HepG2 (cell line): ENCODE measurements at regions of chr5 and their contacts with region 1.

Region 1: DNA sequence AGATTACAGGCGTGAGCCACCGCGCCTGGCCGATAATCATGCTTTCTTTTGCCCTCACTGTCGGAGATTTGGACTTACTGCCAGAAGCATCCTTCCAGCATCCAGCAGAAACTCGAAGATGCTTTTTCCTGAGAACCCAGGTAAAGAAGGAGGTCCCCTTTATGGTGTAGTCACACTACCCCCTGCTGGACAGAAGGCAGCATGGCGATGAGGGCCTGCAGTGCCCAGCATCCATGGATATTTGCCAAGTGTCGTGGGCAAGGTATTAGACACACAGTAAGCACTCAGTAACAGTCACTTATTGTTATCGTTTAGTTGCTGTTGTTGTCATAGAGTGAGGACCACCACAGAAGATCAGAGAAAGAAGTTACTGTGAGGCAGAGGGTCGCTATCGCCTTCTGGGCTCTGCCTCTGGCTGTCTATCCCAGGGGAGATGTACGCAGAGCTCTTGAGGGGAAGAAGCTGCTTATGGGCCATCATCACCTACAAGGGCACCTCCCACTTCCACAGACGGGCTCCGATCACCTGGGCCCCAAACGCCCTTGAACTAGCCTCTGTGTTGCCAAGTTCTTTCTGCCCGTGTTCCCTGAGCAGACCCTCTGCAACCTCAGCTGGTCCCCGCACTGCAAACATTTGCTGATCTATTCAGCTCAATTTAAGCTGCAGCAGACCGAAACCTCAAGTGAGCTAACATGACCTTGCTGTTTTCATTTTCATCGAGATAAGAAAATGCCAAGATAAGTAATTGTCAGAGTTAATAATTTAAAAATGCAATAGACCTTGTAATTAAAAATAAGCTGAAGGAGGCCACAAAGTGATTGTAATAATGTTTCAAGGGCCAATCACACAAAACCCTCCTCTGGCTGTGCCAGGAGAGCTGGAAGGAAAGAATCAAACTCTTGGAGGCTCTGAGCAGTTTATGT is 23.9 kb downstream of the C5orf15 start:
- DNase-seq: peak; percentile 47
- ATAC-seq: peak; percentile 80
- H3K4me3 ChIP-seq: no peak overlapping the region
- H3K27ac ChIP-seq: no peak overlapping the region
- H3K4me1 ChIP-seq: 0 out of 2 replicates have a peak, but pooled peaks cover 6% of the 10 kb centered on the region
- H3K27me3 ChIP-seq: 0 out of 5 replicates have a peak, but pooled peaks cover 0 to 9% of the 10 kb centered on the region in 2 experiments
- CTCF ChIP-seq: peak; percentile 89
- EP300 ChIP-seq: no peak
- POLR2A ChIP-seq: no peak
- RAD21 ChIP-seq: peak; percentile 61

Region 2: DNA sequence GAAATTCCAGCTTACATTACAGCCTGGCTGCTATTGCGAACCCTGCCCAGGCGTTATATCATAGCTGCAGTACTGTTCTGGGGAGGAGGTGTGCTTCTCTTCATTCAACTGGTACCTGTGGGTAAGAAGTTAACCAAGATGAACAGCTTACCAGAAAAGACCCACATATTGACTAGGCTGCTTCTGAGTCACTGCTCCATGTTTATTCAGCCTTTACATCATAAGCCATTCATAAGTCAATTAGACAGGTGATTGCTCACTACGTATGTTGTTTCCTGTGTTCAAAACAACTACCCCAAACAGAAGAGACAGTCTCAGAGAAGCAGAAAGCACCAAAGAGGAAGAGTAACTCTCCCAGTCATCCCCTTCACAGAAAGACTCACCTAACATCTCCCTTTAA is 1609.7 kb before region 1 on chr5:
- CTCF ChIA-PET with region 1: no interaction called
- POLR2A ChIA-PET with region 1: no interaction called
- in situ Hi-C with region 1: no loop called
- intact Hi-C with region 1: no loop called
- DNase-seq: peak; percentile 14
- ATAC-seq: no peak; the same call in 2 of the 3 replicates
- H3K4me3 ChIP-seq: no peak overlapping the region
- H3K27ac ChIP-seq: no peak overlapping the region
- H3K4me1 ChIP-seq: peaks cover 22% of the 10 kb centered on the region
- H3K27me3 ChIP-seq: no peaks in the 10 kb centered on the region
- CTCF ChIP-seq: no peak
- EP300 ChIP-seq: no peak
- POLR2A ChIP-seq: no peak
- RAD21 ChIP-seq: no peak

Region 3: DNA sequence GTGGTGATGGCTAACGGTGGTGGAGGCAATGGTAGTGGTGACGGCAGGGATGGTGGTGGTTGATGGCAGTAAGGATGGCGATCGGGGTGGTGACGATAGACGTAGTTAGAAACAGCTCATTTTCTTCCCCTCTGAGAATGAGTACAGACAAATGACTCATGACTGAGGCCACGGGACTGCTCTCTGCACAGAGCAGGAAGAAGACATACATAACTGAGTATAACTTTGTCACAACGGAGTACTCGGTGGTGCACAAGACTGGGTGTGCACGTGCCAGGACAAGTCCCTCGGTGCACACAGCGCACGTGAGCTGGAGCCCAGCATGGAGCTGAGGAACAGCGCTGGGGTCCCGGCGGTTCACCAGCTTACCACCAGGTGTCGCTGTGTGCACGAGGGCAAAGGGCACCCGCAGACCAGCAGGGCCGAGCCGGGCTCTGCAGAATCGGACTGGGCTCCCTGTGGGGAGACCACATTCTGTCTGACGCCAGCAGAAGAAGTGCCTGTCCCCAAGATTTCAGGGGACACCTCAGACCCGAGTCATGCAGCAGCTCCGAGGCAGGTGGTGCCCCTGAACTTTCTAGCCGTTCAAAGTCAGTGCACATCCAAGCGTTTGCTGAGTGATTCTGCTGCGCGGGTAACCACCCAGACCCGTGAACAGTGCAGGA is 520.8 kb before region 1 on chr5:
- CTCF ChIA-PET with region 1: interaction called, 6 read pairs
- POLR2A ChIA-PET with region 1: no interaction called
- in situ Hi-C with region 1: loop called (anchors 10 kb)
- intact Hi-C with region 1: loop called (anchors 2 kb)
- DNase-seq: peak; percentile 28
- ATAC-seq: peak; percentile 97
- H3K4me3 ChIP-seq: peak overlapping the region in 1 of 3 experiments; percentile 32; a peak in 1 of 6 replicates
- H3K27ac ChIP-seq: no peak overlapping the region
- H3K4me1 ChIP-seq: peaks cover 9% of the 10 kb centered on the region; the same call in 1 of the 2 replicates
- H3K27me3 ChIP-seq: peaks cover 2 to 36% of the 10 kb centered on the region in 2 experiments; a peak in 3 of 5 replicates
- CTCF ChIP-seq: peak; percentile 96
- EP300 ChIP-seq: no peak
- POLR2A ChIP-seq: no peak
- RAD21 ChIP-seq: peak; percentile 84

Region 4: DNA sequence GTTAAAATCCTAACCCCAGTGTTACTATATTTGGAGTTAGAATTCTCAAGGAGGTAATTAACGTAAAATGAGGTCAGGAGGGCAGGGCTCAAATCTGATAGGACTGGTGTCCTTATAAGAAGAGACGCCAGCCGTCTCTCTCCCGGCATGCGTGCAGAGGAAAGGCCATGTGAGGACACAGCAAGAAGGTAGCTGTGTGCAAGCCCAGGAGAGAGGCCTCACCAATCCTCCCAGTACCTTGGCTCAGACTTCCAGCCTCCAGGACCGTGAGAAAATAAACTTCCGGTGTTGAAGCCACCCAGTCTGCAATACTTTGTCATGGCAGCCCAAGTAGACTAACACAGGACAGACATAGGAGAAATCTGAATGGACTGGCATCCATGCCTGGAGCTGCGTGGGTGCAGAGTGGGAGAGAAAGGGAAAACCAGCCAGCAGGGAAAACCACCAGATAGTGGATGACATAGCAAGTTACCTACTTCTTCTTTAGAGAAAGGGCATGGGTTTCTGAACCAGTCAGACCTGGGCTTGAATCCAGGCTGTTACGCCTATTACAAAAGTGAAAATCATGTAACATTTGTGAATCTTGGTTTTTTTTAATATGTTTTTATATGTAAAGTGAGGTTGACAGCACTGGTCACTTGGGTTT is 421.4 kb before region 1 on chr5:
- CTCF ChIA-PET with region 1: no interaction called
- POLR2A ChIA-PET with region 1: no interaction called
- in situ Hi-C with region 1: no loop called
- intact Hi-C with region 1: no loop called
- DNase-seq: no peak
- ATAC-seq: no peak
- H3K4me3 ChIP-seq: no peak overlapping the region
- H3K27ac ChIP-seq: no peak overlapping the region
- H3K4me1 ChIP-seq: no peaks in the 10 kb centered on the region
- H3K27me3 ChIP-seq: peaks cover 2 to 3% of the 10 kb centered on the region in 2 experiments; a peak in 2 of 5 replicates
- CTCF ChIP-seq: no peak
- EP300 ChIP-seq: no peak
- POLR2A ChIP-seq: no peak
- RAD21 ChIP-seq: no peak

Region 5: DNA sequence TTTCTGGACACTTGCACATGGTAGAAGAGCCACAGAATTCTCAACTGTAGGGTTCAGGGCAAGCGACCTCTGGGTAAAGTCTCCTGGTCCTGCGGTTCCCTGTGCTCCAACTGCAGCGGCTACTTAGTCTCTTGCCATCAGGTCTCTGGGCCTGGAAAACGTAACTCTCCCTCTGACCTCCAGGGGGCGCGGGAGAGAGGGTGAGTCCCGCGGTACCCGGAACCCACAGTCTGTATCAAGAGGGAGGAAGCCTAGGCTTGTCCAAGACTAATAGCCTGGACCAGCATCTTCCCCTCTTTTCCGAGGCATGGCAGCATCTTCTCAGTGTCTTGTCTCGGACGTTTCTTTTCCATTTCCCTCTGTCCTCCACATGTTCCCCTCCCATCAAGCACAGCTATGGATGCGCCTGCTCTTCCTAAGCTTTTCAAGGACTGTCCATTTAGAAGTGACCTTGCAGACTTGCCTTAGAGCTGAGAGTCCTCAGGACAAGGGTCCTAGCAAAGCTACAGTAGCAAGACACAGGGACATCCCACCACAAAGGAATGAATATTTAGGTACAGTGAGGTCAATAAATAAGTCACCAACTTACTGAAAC is 391.5 kb before region 1 on chr5:
- CTCF ChIA-PET with region 1: no interaction called
- POLR2A ChIA-PET with region 1: no interaction called
- in situ Hi-C with region 1: no loop called
- intact Hi-C with region 1: loop called (anchors 10 kb)
- DNase-seq: peak; percentile 25
- ATAC-seq: peak; percentile 91
- H3K4me3 ChIP-seq: no peak overlapping the region
- H3K27ac ChIP-seq: no peak overlapping the region
- H3K4me1 ChIP-seq: no peaks in the 10 kb centered on the region
- H3K27me3 ChIP-seq: no peaks in the 10 kb centered on the region
- CTCF ChIP-seq: peak; percentile 76
- EP300 ChIP-seq: no peak
- POLR2A ChIP-seq: no peak
- RAD21 ChIP-seq: peak; percentile 29; the same call in 1 of the 2 replicates

Region 6: DNA sequence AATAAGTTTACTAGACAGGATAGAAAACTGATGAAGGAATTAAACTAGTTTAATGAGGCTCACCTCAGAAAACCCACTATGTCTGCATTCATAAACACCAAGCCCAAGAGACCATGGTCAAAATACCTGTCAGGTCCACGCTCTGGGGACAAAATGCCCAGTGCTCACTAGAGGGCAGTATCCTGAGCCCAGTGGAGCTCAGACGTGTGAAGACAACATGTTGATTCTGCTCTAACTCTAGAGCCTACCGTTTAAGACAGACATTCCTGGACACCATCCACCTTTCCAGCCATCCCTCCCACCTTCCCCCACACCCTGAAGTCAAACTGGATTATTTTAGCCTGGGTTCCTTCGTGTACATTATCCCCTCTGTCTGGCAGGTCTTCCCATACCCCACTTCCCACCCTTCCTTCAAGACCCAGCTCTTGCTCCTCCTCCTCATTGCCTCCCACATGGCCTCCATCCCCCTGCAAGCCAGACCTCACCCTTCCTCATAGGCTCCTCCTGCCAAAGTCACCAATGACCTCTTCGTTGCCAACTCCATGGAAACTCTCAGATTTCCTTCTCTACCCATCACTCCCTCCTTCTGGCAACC is 189.9 kb before region 1 on chr5:
- CTCF ChIA-PET with region 1: interaction called, 5 read pairs
- POLR2A ChIA-PET with region 1: no interaction called
- in situ Hi-C with region 1: no loop called
- intact Hi-C with region 1: loop called (anchors 10 kb)
- DNase-seq: peak; percentile 28
- ATAC-seq: peak; percentile 83
- H3K4me3 ChIP-seq: no peak overlapping the region
- H3K27ac ChIP-seq: no peak overlapping the region
- H3K4me1 ChIP-seq: no peaks in the 10 kb centered on the region
- H3K27me3 ChIP-seq: no peaks in the 10 kb centered on the region
- CTCF ChIP-seq: peak; percentile 68
- EP300 ChIP-seq: no peak
- POLR2A ChIP-seq: no peak
- RAD21 ChIP-seq: no peak

Region 7: DNA sequence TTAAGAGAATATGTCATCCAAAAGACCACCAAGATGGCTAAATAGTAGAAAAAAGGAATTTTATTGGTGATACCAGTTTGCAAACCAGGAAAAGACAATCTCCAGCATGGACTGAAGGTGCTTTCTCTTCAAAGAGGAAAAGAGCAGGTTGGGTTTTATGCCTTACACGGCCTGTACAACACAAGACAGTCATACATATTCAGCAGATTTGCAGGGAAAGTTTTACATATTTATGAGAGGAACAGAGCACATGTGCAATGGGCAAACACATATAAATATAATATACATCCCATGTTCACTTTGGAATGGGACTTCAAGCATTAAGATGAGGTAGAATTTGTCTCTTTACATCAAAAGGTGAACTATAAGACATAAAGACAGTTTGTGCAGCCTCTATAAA is 351.7 kb after region 1 on chr5:
- CTCF ChIA-PET with region 1: no interaction called
- POLR2A ChIA-PET with region 1: no interaction called
- in situ Hi-C with region 1: no loop called
- intact Hi-C with region 1: no loop called
- DNase-seq: no peak
- ATAC-seq: no peak
- H3K4me3 ChIP-seq: no peak overlapping the region
- H3K27ac ChIP-seq: no peak overlapping the region
- H3K4me1 ChIP-seq: peaks cover 22% of the 10 kb centered on the region
- H3K27me3 ChIP-seq: no peaks in the 10 kb centered on the region
- CTCF ChIP-seq: no peak
- EP300 ChIP-seq: no peak
- POLR2A ChIP-seq: no peak
- RAD21 ChIP-seq: no peak

Region 8: GRCh38 chr5:134370871-134371833 is 426.6 kb after region 1 on chr5 and contains the start of gene UBE2B:
- CTCF ChIA-PET with region 1: no interaction called
- POLR2A ChIA-PET with region 1: no interaction called
- in situ Hi-C with region 1: no loop called
- intact Hi-C with region 1: no loop called
- DNase-seq: peak; percentile 99
- ATAC-seq: peak; percentile 71
- H3K4me3 ChIP-seq: peak within 1 kb of the TSS; percentile 90 to 99 (median 98)
- H3K27ac ChIP-seq: peak within 1 kb of the TSS; percentile 99
- H3K4me1 ChIP-seq: peaks cover 45% of the 10 kb centered on the region
- H3K27me3 ChIP-seq: no peaks in the 10 kb centered on the region; a peak in 1 of 5 replicates
- CTCF ChIP-seq: no peak
- EP300 ChIP-seq: peak in 1 of 2 experiments; percentile 61; a peak in 2 of 4 replicates
- POLR2A ChIP-seq: peak; percentile 62 to 75
- RAD21 ChIP-seq: no peak
- total RNA-seq, gene UBE2B: 25.2 and 56.7 TPM in 2 replicates